ENCODE measurements at regions of chr4 and their contacts with region 1.

Region 1: DNA sequence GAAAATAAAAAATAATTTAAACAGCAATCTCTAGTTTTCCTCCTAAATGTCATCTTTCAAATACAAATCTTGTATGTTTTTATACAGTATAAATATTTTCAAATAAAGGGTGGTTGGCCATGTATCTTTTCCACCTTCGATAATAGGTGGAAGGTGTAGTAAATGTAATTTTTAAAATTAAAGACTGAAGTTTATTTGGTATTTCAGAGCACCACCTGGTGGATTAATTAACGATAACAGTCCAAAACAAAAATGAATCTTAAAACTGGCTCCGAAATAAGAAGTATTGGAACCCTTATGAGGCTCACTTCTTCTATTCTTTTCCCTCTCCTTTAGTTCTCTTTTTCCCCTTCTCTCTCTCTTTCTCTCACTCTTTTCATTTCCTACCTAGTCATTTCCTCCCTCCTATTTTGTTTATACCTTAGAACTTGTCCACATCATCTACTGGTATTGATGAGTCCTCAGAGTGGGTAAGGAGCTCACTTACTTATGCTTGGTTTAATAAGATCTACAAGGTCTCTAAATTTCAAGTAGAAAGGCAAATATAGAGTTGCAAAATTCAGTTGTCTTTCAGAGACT is 82.9 kb upstream of the EXOC1L start:
- DNase-seq: no peak
- ATAC-seq: no peak
- H3K4me3 ChIP-seq: no peak overlapping the region
- H3K27ac ChIP-seq: no peak overlapping the region
- H3K4me1 ChIP-seq: no peaks in the 10 kb centered on the region
- H3K27me3 ChIP-seq: no peaks in the 10 kb centered on the region

Region 2: DNA sequence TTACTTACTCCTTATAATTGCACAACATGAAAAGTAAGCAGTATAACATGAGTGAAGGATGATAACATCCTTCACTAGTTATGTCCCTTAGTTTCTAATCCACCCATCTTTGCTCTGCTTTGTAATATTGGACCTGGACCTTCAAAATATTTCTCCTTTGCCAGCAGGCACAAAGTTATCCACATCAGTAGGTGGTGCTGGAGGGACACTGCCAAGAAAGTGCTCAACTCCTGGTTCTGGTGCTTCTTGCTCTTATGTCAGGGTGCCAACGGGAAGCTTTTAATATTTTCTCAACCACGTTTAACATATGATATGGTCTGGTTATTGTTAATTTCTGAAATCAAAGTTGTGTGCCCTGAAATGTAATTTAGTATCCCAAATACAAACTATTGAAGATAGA is 291.9 kb before region 1 on chr4:
- intact Hi-C with region 1: loop called in 1 of 2 experiments (anchors 10 kb)
- DNase-seq: no peak
- ATAC-seq: no peak
- H3K4me3 ChIP-seq: no peak overlapping the region
- H3K27ac ChIP-seq: no peak overlapping the region
- H3K4me1 ChIP-seq: no peaks in the 10 kb centered on the region
- H3K27me3 ChIP-seq: no peaks in the 10 kb centered on the region